ENCODE measurements at regions of chr20 and their contacts with region 1.

Region 1: DNA sequence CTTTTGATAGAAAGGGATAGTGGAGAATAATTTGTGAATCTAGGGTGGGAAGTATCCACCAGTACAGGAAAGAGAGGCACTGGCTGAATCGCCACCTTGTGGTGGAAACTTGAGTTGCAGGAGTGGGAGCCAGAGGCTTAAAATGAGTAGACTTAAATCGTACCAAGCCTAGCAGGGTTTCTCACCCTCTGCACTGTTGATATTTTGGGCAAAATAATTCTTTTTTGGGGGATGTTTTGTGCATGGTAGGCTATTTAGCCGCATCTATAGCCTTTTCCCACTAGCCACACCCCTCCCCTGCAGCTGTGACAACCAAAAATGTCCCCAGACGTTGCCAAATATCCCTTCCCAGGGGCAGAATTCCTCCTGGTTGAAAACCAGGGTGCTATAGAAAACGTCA is 119.1 kb downstream of the DHX35 start:
- DNase-seq: peak; percentile 87
- ATAC-seq: peak; percentile 86
- H3K4me3 Mint-ChIP-seq: no peak overlapping the region
- H3K27ac Mint-ChIP-seq: no peak overlapping the region
- H3K4me1 Mint-ChIP-seq: peaks cover 8% of the 10 kb centered on the region
- H3K27me3 Mint-ChIP-seq: peaks cover 36% of the 10 kb centered on the region

Region 2: GRCh38 chr20:38842558-38842981 is 238.7 kb before region 1 on chr20:
- CTCF ChIA-PET with region 1: no interaction called
- DNase-seq: peak; percentile 62
- ATAC-seq: no peak
- H3K4me3 Mint-ChIP-seq: peak overlapping the region; percentile 32
- H3K27ac Mint-ChIP-seq: peak overlapping the region; percentile 77
- H3K4me1 Mint-ChIP-seq: peaks cover 85% of the 10 kb centered on the region
- H3K27me3 Mint-ChIP-seq: no peaks in the 10 kb centered on the region

Region 3: GRCh38 chr20:39057911-39058310 is 23.3 kb before region 1 on chr20:
- CTCF ChIA-PET with region 1: interaction called, 13 read pairs
- DNase-seq: no peak
- ATAC-seq: no peak
- H3K4me3 Mint-ChIP-seq: no peak overlapping the region
- H3K27ac Mint-ChIP-seq: no peak overlapping the region
- H3K4me1 Mint-ChIP-seq: no peaks in the 10 kb centered on the region
- H3K27me3 Mint-ChIP-seq: peaks cover 26% of the 10 kb centered on the region

Region 4: DNA sequence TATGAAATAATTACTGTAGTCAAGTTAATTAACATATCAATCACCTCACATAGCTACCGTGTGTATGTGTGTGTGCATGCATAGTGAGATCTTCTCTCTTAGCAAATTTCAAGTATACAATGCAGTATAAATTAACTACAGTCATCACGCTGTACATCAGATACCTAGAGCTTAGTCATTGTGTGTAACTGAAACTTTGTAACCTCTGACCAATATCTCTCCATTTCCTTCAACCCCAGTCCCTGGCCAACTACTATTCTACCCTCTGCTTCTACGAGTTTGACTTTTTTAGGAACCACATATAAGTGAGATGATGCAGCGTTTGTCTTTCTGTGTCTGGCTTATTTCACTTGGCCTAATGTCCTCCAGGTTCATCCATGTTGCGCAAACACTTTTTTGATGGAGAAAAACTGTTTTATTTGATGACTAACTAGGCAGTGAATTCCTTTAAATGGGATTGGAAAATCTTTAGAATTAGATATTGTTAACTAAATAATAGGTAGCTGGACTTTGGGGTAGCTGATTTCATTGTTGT is 340.4 kb after region 1 on chr20:
- CTCF ChIA-PET with region 1: no interaction called
- DNase-seq: no peak
- ATAC-seq: no peak
- H3K4me3 Mint-ChIP-seq: no peak overlapping the region
- H3K27ac Mint-ChIP-seq: no peak overlapping the region
- H3K4me1 Mint-ChIP-seq: no peaks in the 10 kb centered on the region
- H3K27me3 Mint-ChIP-seq: no peaks in the 10 kb centered on the region

Measured in activated CD8-positive, alpha-beta memory T cell treated with anti-CD3 and anti-CD28 coated beads, Interleukin-2, amount 10 ng/mL, durations not matched to agents 7 days and 5 days (primary cell).